Activated B cell treated with CpG ODN at 0.5 μM for 24 hours (primary cell): ENCODE measurements at regions of chr18 and their contacts with region 1.

Region 1: DNA sequence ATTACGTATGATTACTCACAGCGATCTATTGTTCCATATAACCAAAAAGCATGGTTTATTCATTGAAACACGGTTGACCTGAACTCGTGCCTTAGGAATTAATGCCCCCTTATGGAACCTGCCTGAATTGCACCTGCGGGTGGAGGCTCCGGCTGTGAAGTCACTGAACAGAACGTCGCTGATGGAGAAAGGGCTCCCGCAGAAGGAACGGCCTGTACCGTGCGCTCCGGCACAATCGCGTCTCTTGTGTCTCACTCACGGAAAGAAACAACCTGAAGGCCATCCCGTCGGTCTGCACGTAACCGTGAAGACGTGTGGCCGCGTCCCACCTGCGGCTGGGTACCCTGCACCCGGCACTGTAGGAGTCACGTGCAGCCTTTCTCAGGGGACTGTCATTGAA is 133.1 kb downstream of the NFATC1 start:
- DNase-seq: peak; percentile 54
- ATAC-seq: peak; percentile 43
- H3K4me3 Mint-ChIP-seq: no peak overlapping the region
- H3K27ac Mint-ChIP-seq: no peak overlapping the region
- H3K4me1 Mint-ChIP-seq: peaks cover 19% of the 10 kb centered on the region
- H3K27me3 Mint-ChIP-seq: no peaks in the 10 kb centered on the region
- CTCF ChIP-seq: peak; percentile 27

Region 2: DNA sequence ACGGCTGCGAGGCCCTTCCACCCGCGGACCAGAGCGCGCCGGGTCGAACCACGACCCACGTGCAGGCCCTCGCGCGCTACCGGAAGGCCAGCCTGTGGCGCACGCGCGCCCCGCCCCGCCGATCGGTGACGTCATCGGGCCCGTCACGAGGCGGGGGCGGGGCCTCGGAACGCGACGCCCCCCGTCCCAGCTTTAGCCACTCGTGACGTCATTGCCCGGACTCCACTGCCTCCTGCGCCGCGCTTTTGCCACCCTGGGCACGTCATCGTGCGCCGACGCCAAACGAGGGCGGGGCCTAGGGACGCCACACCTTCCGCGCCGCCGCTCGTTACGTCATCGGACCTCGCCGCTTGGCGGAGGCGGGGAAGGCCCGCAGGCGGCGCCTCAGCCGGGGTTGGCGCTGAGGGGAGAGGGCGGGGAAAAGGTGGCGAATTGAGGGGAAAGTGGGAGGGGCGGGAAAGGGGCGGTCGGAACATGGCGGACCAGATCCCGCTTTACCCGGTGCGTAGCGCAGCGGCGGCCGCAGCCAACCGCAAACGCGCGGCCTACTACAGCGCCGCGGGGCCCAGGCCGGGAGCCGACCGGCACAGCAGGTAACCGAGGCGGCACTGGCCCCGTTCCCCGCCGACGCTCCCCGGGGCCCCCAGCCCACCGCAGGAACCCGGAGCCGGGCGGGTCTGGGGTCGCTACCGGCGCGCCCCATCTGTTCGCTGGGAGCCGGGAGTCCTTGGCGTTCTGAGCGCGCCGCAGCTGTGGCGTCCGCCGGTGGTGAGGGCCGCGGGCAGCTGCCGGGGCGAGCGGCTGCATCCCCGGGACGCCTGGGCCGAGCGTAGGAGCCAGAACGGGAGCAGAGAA is 459.7 kb before region 1 on chr18 and contains the start of gene ATP9B:
- CTCF ChIA-PET with region 1: no interaction called
- POLR2A ChIA-PET with region 1: no interaction called
- intact Hi-C with region 1: loop called (anchors 10 kb)
- DNase-seq: peak; percentile 99
- ATAC-seq: peak; percentile 84
- H3K4me3 Mint-ChIP-seq: peak within 1 kb of the TSS; percentile 88
- H3K27ac Mint-ChIP-seq: peak within 1 kb of the TSS; percentile 95
- H3K4me1 Mint-ChIP-seq: peaks cover 30% of the 10 kb centered on the region
- H3K27me3 Mint-ChIP-seq: peaks cover 3% of the 10 kb centered on the region
- CTCF ChIP-seq: no peak
- total RNA-seq, gene ATP9B: 41.5 and 49.2 TPM in 2 replicates

Region 3: GRCh38 chr18:79393635-79394533 is 135.0 kb before region 1 on chr18:
- CTCF ChIA-PET with region 1: interaction called, 30 read pairs
- POLR2A ChIA-PET with region 1: interaction called, 38 read pairs
- intact Hi-C with region 1: loop called (anchors 1 kb)
- DNase-seq: peak; percentile 52
- ATAC-seq: peak; percentile 13
- H3K4me3 Mint-ChIP-seq: peak overlapping the region; percentile 84
- H3K27ac Mint-ChIP-seq: peak overlapping the region; percentile 71
- H3K4me1 Mint-ChIP-seq: peaks cover 35% of the 10 kb centered on the region
- H3K27me3 Mint-ChIP-seq: no peaks in the 10 kb centered on the region
- CTCF ChIP-seq: no peak

Region 4: DNA sequence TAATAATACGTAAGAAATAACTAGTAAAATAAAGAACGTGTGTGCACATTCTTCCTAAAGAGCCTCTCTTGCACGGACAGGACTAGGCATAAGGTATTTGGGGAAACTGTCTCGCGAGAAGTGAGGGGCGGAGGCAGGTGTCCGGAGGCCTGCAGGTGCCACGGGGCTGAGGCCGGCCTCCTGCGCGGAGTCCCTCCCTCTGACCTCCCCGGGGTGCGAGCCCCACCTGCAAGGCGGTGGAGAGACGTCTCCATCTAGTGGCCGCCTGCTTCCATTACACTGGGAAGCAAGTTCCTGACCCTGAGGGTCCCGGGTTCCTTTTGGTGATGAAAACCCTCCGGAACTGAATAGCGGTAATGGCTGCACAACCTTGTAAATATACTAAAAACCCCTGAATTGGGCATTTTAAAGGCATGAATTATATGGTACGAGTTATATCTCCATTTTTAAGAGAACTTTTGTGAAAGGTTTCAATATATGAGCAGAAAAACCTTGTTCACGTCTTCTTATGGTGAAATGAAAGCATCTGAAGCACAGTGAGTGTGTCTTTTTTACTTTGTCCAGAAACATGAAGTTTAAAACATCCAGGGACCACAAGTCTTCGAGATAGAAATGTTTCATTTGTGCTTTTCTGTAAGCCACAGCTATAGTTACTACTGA is 115.3 kb after region 1 on chr18:
- CTCF ChIA-PET with region 1: interaction called, 9 read pairs
- POLR2A ChIA-PET with region 1: interaction called, 3 read pairs
- intact Hi-C with region 1: loop called (anchors 1 kb)
- DNase-seq: peak; percentile 68
- ATAC-seq: peak; percentile 93
- H3K4me3 Mint-ChIP-seq: no peak overlapping the region
- H3K27ac Mint-ChIP-seq: no peak overlapping the region
- H3K4me1 Mint-ChIP-seq: peaks cover 24% of the 10 kb centered on the region
- H3K27me3 Mint-ChIP-seq: no peaks in the 10 kb centered on the region
- CTCF ChIP-seq: peak; percentile 97

Region 5: GRCh38 chr18:80147418-80148325 is 618.8 kb after region 1 on chr18:
- CTCF ChIA-PET with region 1: no interaction called
- POLR2A ChIA-PET with region 1: no interaction called
- intact Hi-C with region 1: loop called (anchors 10 kb)
- DNase-seq: peak; percentile 74
- ATAC-seq: peak; percentile 88
- H3K4me3 Mint-ChIP-seq: peak overlapping the region; percentile 90
- H3K27ac Mint-ChIP-seq: peak overlapping the region; percentile 69
- H3K4me1 Mint-ChIP-seq: peaks cover 20% of the 10 kb centered on the region
- H3K27me3 Mint-ChIP-seq: no peaks in the 10 kb centered on the region
- CTCF ChIP-seq: no peak